HEK293T (cell line): ENCODE measurements at regions of chr2 and their contacts with region 1.

Region 1: GRCh38 chr2:134411828-134412638 is 158.2 kb downstream of the MGAT5 start:
- DNase-seq: peak; percentile 70

Region 2: GRCh38 chr2:134258684-134259388 is 153.2 kb before region 1 on chr2:
- CTCF ChIA-PET with region 1: no interaction called
- POLR2A ChIA-PET with region 1: no interaction called
- DNase-seq: no peak

Region 3: GRCh38 chr2:134401081-134401497 is 10.9 kb before region 1 on chr2:
- CTCF ChIA-PET with region 1: interaction called, 10 read pairs
- POLR2A ChIA-PET with region 1: no interaction called
- DNase-seq: no peak